ENCODE measurements at regions of chr17 and their contacts with region 1.

Region 1: DNA sequence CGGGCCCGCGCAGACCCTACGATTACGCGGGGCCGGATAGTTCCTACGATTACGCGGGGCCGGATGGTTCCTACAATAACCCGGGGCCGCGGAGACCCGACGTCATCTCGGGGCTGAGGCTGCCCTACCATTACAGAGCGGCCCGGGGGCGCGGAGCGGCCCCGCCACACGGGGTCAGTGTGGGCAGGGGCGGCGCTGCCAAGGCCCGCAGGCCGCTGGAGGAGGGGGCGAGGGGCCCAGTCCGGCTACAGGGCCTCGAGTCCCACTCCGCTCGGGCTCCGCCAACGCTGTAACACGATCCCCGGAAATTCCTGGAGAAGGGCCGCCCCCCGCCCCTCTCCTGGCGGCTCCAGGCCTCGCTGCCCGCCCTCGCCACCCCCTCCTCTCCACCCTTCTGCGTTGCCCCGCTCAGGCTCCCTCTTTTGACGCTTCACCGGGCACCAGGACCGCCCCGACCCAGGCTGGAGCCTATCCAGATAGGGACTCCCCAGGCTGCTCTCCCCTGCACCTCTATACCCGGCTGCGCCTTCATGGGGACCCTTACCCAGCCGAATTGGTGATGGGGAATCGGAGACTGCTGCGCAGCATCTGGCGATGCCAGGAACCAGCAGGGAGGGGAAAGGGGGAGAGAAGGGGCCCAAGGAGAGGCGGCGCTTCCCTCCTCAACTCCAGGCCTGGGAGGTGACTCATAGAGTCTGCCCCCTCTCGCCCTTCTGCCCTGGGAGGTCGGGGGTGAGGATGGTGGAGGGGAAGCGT is at the start of gene RAB34:
- DNase-seq: peak in 6 of 14 experiments; percentile 12 to 60 (median 43)
- ATAC-seq: no peak
- H3K4me3 ChIP-seq: peak within 1 kb of the TSS; percentile 36
- H3K4me3 Mint-ChIP-seq: peak within 1 kb of the TSS; percentile 79
- H3K27ac ChIP-seq: no peak within 1 kb of the TSS
- H3K27ac Mint-ChIP-seq: peak within 1 kb of the TSS; percentile 79
- H3K4me1 ChIP-seq: peaks cover 55% of the 10 kb centered on the region
- H3K4me1 Mint-ChIP-seq: peaks cover 41% of the 10 kb centered on the region
- H3K27me3 ChIP-seq: peaks cover 17 to 21% of the 10 kb centered on the region in 2 experiments
- H3K27me3 Mint-ChIP-seq: peaks cover 35% of the 10 kb centered on the region
- CTCF ChIP-seq: no peak
- total RNA-seq, gene RAB34: 20.7 to 21.3 TPM

Region 2: GRCh38 chr17:28030386-28030785 is 687.4 kb before region 1 on chr17:
- CTCF ChIA-PET with region 1: no interaction called
- POLR2A ChIA-PET with region 1: no interaction called
- intact Hi-C with region 1: no loop called
- DNase-seq: no peak
- ATAC-seq: no peak
- H3K4me3 ChIP-seq: no peak overlapping the region
- H3K4me3 Mint-ChIP-seq: no peak overlapping the region
- H3K27ac ChIP-seq: no peak overlapping the region
- H3K27ac Mint-ChIP-seq: no peak overlapping the region
- H3K4me1 ChIP-seq: no peaks in the 10 kb centered on the region
- H3K4me1 Mint-ChIP-seq: no peaks in the 10 kb centered on the region
- H3K27me3 ChIP-seq: no peaks in the 10 kb centered on the region
- H3K27me3 Mint-ChIP-seq: no peaks in the 10 kb centered on the region
- CTCF ChIP-seq: no peak

Region 3: GRCh38 chr17:28634206-28634856 is 83.4 kb before region 1 on chr17:
- CTCF ChIA-PET with region 1: no interaction called
- POLR2A ChIA-PET with region 1: no interaction called
- intact Hi-C with region 1: no loop called
- DNase-seq: no peak
- ATAC-seq: no peak
- H3K4me3 ChIP-seq: no peak overlapping the region
- H3K4me3 Mint-ChIP-seq: no peak overlapping the region
- H3K27ac ChIP-seq: no peak overlapping the region
- H3K27ac Mint-ChIP-seq: no peak overlapping the region
- H3K4me1 ChIP-seq: peaks cover 5% of the 10 kb centered on the region
- H3K4me1 Mint-ChIP-seq: peaks cover 16% of the 10 kb centered on the region
- H3K27me3 ChIP-seq: no peaks in the 10 kb centered on the region
- H3K27me3 Mint-ChIP-seq: no peaks in the 10 kb centered on the region
- CTCF ChIP-seq: no peak

Region 4: GRCh38 chr17:28661635-28662537 is 55.9 kb before region 1 on chr17 and contains the starts of genes SDF2 and SUPT6H:
- CTCF ChIA-PET with region 1: interaction called, 7 read pairs
- POLR2A ChIA-PET with region 1: interaction called, 20 read pairs
- intact Hi-C with region 1: loop called (anchors 2 to 5 kb)
- DNase-seq: peak; percentile 88 to 97 (median 92)
- ATAC-seq: peak; percentile 83
- H3K4me3 ChIP-seq: peak within 1 kb of the TSS; percentile 81
- H3K4me3 Mint-ChIP-seq: peak within 1 kb of the TSS; percentile 99
- H3K27ac ChIP-seq: peak within 1 kb of the TSS; percentile 97 to 99
- H3K27ac Mint-ChIP-seq: peak within 1 kb of the TSS; percentile 99
- H3K4me1 ChIP-seq: peaks cover 45% of the 10 kb centered on the region
- H3K4me1 Mint-ChIP-seq: peaks cover 64% of the 10 kb centered on the region
- H3K27me3 ChIP-seq: no peaks in the 10 kb centered on the region
- H3K27me3 Mint-ChIP-seq: no peaks in the 10 kb centered on the region
- CTCF ChIP-seq: no peak
- total RNA-seq, gene SDF2: 30.3 to 32.0 TPM
- total RNA-seq, gene SUPT6H: 149 to 151 TPM

Region 5: GRCh38 chr17:28743225-28744103 is 25.7 kb after region 1 on chr17 and contains the start of gene TRAF4:
- CTCF ChIA-PET with region 1: interaction called, 373 read pairs
- POLR2A ChIA-PET with region 1: interaction called, 21 read pairs
- intact Hi-C with region 1: no loop called
- DNase-seq: peak in 13 of 14 experiments; percentile 53 to 92 (median 67)
- ATAC-seq: peak; percentile 88
- H3K4me3 ChIP-seq: peak within 1 kb of the TSS; percentile 76
- H3K4me3 Mint-ChIP-seq: peak within 1 kb of the TSS; percentile 90
- H3K27ac ChIP-seq: peak within 1 kb of the TSS; percentile 72 to 88
- H3K27ac Mint-ChIP-seq: peak within 1 kb of the TSS; percentile 88
- H3K4me1 ChIP-seq: peaks cover 59% of the 10 kb centered on the region
- H3K4me1 Mint-ChIP-seq: peaks cover 27% of the 10 kb centered on the region
- H3K27me3 ChIP-seq: no peaks in the 10 kb centered on the region
- H3K27me3 Mint-ChIP-seq: no peaks in the 10 kb centered on the region
- CTCF ChIP-seq: no peak
- total RNA-seq, gene TRAF4: 411 to 416 TPM

Region 6: DNA sequence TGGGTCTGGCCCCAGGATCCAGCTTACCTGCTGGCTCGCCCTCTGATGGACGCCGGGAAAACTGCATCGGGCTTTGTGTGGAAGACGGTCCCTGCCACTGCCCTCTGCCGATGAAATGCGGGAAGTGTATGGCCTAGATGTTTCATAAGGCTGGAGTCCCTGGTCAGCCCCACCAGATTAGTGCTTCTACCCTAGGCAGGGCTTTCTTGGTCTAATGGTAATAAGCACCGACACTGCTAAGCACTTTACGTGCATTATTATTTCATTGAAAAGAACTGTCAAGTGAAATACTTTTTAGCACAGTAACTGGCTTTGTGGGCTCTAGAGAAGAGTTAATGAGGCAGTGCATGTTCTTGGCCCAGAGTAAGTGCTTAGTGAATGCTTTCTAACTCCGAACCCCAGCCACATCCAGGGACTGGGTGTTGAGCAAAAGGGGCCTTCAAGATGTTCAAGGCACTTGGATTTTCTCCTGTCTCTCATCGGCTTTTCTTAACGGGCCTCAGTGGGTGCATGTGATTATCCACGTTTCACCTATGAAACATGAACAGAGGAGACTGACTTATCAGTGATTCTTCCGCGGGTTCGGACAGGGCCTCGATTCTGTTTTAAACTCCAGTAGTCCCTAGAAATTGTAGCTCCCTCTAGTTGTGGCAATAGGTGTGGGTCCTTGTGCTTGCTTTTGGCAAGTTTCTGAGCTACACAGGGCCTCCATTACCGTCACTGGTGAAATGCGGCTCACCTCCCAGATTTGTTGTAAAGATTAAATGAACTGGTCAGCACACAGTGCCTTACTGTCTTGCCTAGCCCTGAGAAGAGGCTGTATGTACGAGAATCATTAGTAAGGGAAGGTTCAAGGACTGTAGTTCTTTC is 32.7 kb after region 1 on chr17:
- CTCF ChIA-PET with region 1: interaction called, 373 read pairs
- POLR2A ChIA-PET with region 1: interaction called, 21 read pairs
- intact Hi-C with region 1: no loop called
- DNase-seq: peak; percentile 82 to 94 (median 86)
- ATAC-seq: peak; percentile 90
- H3K4me3 ChIP-seq: no peak overlapping the region
- H3K4me3 Mint-ChIP-seq: peak overlapping the region; percentile 42
- H3K27ac ChIP-seq: no peak overlapping the region
- H3K27ac Mint-ChIP-seq: peak overlapping the region; percentile 70
- H3K4me1 ChIP-seq: peaks cover 27% of the 10 kb centered on the region
- H3K4me1 Mint-ChIP-seq: peaks cover 21% of the 10 kb centered on the region
- H3K27me3 ChIP-seq: no peaks in the 10 kb centered on the region
- H3K27me3 Mint-ChIP-seq: no peaks in the 10 kb centered on the region
- CTCF ChIP-seq: peak; percentile 100

Region 7: DNA sequence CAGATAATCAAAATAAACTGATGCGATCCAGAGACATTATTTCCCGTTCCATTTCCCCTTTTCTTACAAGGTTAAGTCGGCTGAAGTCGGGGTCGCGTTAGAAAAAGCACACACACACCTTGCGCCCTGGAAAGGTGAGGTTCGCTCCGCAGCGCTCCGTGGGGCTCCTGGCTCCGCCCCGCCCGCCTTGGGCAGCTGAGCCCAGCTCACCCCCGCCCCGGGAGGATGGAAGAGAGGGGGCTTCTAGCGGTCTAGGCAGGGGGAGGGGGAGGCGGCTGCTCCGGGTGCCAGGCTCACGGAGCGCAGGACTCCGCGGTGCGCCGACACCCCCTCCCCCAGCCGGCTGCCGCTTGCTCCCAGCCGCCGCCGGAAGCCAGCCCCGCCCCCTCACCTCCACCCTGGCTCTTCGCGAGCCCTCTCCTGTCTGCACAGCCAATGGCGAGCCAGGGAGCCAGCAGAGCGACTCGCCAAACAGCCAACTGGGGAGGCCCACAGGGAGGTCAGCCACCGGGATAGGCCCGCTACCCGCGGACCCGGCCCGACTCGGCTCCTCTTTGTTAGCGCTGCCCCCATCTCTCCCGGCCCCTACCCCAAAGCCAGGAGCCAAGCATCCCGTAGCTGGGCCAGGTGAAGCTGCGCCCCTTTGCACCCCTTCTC is 94.5 kb after region 1 on chr17:
- CTCF ChIA-PET with region 1: no interaction called
- POLR2A ChIA-PET with region 1: interaction called, 7 read pairs
- intact Hi-C with region 1: loop called in 1 of 2 experiments (anchors 2 kb)
- DNase-seq: peak; percentile 91 to 98 (median 95)
- ATAC-seq: peak; percentile 95
- H3K4me3 ChIP-seq: peak overlapping the region; percentile 78
- H3K4me3 Mint-ChIP-seq: peak overlapping the region; percentile 92
- H3K27ac ChIP-seq: peak overlapping the region; percentile 91 to 93
- H3K27ac Mint-ChIP-seq: peak overlapping the region; percentile 90
- H3K4me1 ChIP-seq: peaks cover 15% of the 10 kb centered on the region
- H3K4me1 Mint-ChIP-seq: peaks cover 49% of the 10 kb centered on the region
- H3K27me3 ChIP-seq: no peaks in the 10 kb centered on the region
- H3K27me3 Mint-ChIP-seq: no peaks in the 10 kb centered on the region
- CTCF ChIP-seq: no peak